ENCODE measurements at regions of chr1 and their contacts with region 1.

Region 1: DNA sequence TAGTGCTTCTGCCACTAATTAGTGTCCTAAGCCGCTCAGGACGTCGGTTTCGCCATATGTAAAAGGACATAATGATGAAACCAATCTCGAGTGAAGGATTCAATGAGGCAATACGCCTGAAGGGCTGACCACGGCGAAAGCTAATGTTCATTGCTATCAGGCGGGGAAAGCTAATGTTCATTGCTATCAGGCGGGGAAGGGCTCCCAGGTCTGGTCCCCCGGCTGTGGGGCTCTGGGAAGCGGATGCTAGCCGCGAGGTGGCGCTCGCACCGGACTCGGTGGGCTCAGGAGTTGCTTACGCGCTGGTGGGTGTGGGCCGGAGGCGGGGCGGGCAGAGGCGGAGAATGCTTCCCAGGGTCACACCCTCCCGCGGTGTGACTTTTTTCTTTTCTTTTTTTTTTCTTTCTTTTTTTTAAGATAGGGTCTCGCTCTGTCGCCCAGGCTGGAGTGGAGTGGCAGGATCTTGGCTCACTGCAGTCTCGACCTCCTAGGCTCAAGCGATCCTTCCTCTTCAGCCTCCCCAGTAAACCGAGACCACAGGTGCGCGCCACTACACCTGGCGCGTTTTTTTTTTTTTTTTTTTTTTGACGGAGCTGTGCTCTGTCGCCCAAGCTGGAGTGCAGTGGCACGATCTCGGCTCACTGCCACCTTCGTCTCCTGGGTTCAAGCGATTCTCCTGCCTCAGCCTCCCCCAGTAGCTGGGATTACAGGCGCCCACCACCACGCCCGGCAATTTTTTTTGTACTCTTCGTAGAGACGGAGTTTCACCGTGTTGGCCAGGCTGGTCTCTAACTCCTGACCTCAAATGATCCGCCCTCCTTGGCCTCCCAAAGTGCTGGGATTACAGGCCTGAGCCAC is 1.1 kb upstream of the PEAR1 start:
- DNase-seq: peak; percentile 92
- ATAC-seq: peak; percentile 97
- H3K4me3 Mint-ChIP-seq: peak overlapping the region; percentile 67
- H3K27ac Mint-ChIP-seq: no peak overlapping the region
- H3K4me1 Mint-ChIP-seq: peaks cover 29% of the 10 kb centered on the region
- H3K27me3 Mint-ChIP-seq: peaks cover 50% of the 10 kb centered on the region

Region 2: DNA sequence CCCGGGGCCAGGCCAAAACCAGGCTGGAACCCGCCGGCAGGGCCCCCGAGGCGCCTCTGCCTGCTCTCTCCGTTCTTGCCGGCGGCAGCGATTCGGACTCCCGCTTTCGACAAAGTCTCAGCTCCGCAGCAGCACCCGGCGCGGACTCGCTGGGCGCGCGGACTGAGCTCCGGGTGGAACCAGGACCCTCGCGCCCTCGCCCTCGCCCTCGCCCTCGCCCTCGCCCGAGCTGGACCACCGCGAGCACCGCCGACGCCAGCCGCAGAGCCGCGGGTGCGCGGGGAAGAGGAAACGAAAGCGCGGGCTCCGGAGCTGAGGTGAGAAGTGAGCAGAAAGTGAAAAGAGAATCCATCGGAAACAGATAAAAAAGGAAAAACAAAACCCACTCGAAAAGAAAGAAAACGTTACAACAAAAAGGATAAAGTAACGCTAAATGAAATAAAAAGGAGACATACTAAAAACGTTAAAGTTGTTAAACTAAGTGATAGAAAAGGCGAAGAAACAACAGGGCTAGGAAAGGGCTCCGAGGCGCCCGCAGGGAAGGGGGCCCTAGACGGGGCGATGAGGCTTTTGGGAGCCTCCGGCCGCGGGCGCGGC is 456.8 kb before region 1 on chr1:
- CTCF ChIA-PET with region 1: no interaction called
- POLR2A ChIA-PET with region 1: no interaction called
- DNase-seq: no peak
- ATAC-seq: peak; percentile 36
- H3K4me3 Mint-ChIP-seq: peak overlapping the region; percentile 66
- H3K27ac Mint-ChIP-seq: no peak overlapping the region
- H3K4me1 Mint-ChIP-seq: peaks cover 24% of the 10 kb centered on the region
- H3K27me3 Mint-ChIP-seq: peaks cover 87% of the 10 kb centered on the region

Region 3: DNA sequence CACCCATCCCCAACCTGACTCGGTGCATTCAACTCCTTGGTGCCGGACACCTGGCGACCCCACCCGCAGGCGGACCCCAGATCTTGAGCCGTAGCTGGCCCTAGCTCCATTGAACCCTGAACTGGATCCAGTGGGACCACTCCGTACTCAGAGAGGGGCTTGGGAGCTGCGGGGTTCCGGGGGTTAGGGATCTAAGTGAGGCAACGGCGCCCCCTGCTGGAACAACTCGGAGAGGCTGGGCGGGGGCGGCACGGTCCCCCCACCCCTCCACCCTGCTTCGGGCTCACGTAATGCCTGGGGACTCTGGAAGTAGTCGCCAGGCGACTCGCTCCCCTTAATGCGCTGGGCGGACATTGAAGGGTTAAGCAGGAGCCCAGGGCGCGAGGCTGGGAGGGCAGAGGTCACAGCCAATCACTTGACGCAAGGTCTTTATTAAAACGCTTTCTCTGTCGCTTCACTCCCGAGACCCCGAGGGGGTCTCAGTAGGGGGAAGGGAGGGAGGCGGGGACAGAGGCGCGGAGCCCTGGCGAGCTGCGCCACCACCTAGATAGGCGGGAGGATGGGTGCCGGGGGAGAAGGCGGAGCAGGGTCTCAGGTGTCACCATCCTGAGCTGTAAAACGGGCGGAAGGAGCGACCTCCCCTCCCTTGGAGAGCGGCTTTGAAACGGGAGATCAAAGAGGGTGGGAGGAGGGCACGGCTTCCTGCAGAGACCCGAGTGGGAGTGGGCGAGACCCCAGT is 186.3 kb before region 1 on chr1:
- CTCF ChIA-PET with region 1: interaction called, 15 read pairs
- POLR2A ChIA-PET with region 1: no interaction called
- DNase-seq: peak; percentile 70
- ATAC-seq: peak; percentile 65
- H3K4me3 Mint-ChIP-seq: peak overlapping the region; percentile 71
- H3K27ac Mint-ChIP-seq: no peak overlapping the region
- H3K4me1 Mint-ChIP-seq: peaks cover 28% of the 10 kb centered on the region
- H3K27me3 Mint-ChIP-seq: peaks cover 33% of the 10 kb centered on the region

Region 4: DNA sequence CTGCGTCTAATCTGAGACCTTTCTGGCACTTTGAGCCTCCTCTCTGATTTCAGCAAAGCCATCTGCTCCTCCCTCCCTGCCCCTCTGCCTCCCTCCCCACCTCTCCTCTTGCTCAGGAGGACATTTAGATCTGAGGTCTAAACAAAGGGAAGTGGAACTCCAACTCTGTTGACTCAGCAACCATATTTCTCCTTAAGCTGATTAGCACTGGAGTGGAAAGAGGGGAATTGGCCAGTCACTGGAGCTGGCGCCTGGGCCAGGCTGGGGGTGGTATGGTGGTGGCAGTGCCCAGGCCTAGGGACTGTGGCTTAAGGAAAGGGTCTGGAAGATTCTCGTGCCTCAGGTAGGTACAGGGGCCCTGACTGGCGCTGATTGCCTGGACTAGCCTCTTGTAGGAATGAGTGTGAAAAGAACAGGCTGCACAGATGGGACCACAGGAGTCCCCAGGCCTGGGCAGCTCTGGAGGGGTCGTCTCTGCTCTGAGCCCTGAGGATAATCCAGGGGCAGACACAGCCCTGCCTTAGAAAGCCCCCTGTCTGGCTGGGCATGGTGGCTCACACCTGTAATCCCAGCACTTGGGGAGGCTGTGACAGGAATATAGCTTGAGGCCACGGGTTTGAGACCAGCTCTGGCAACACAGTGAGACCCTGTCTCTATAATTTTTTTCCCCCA is 87.7 kb before region 1 on chr1:
- CTCF ChIA-PET with region 1: interaction called, 23 read pairs
- POLR2A ChIA-PET with region 1: interaction called, 3 read pairs
- DNase-seq: no peak
- ATAC-seq: no peak
- H3K4me3 Mint-ChIP-seq: no peak overlapping the region
- H3K27ac Mint-ChIP-seq: peak overlapping the region; percentile 73
- H3K4me1 Mint-ChIP-seq: peaks cover 55% of the 10 kb centered on the region
- H3K27me3 Mint-ChIP-seq: no peaks in the 10 kb centered on the region

Region 5: DNA sequence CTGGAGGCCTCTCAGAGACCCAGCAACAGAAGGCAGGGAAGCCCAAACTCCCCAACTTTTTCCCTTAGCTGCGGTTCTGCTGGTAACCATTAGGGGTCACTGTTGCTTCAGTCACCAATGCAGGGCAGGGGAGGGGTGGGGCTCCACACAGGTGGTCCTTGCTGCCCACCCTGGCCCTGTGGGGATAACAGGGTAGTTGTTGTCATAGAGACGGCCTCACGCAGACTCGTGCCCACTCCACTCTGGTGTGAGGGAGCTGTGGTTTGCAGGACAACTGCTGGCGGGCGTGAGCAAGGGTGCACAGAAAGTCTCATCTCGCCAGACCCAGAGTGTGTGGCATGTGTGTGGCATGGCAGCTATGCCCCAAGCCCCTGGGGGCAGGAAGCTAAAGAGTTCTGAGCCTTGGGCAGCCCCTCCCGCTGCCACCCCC is 53.4 kb before region 1 on chr1:
- CTCF ChIA-PET with region 1: interaction called, 93 read pairs
- POLR2A ChIA-PET with region 1: interaction called, 3 read pairs
- DNase-seq: peak; percentile 67
- ATAC-seq: peak; percentile 66
- H3K4me3 Mint-ChIP-seq: no peak overlapping the region
- H3K27ac Mint-ChIP-seq: no peak overlapping the region
- H3K4me1 Mint-ChIP-seq: peaks cover 48% of the 10 kb centered on the region
- H3K27me3 Mint-ChIP-seq: peaks cover 17% of the 10 kb centered on the region

Region 6: DNA sequence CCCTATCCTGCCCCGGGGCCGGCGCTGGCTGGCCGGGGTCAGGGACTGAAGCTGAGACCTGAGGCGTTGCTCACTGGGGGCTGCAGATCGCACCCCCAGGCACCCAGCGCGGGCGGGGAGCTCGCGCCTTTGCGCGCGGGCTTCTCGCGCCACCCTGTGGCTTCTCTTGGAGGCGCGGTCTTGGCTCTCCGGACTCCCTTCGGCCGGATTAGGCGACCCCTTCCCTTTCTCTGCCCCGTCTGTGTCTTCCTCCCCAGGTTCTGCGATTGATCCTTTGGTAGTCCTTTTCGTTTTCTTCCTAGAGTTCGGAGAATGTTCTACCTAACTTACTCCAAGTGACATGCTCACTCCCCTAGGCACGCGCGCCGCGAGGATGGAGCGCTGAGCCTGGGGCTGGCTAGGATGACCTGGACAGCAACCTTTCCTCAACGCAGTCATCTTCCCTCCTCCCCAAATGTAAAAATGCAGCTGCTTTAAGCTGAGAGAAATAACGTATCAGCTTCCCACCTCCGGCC is 32.2 kb before region 1 on chr1:
- CTCF ChIA-PET with region 1: interaction called, 138 read pairs
- POLR2A ChIA-PET with region 1: no interaction called
- DNase-seq: peak; percentile 68
- ATAC-seq: peak; percentile 62
- H3K4me3 Mint-ChIP-seq: peak overlapping the region; percentile 72
- H3K27ac Mint-ChIP-seq: peak overlapping the region; percentile 54
- H3K4me1 Mint-ChIP-seq: peaks cover 56% of the 10 kb centered on the region
- H3K27me3 Mint-ChIP-seq: peaks cover 39% of the 10 kb centered on the region

Region 7: DNA sequence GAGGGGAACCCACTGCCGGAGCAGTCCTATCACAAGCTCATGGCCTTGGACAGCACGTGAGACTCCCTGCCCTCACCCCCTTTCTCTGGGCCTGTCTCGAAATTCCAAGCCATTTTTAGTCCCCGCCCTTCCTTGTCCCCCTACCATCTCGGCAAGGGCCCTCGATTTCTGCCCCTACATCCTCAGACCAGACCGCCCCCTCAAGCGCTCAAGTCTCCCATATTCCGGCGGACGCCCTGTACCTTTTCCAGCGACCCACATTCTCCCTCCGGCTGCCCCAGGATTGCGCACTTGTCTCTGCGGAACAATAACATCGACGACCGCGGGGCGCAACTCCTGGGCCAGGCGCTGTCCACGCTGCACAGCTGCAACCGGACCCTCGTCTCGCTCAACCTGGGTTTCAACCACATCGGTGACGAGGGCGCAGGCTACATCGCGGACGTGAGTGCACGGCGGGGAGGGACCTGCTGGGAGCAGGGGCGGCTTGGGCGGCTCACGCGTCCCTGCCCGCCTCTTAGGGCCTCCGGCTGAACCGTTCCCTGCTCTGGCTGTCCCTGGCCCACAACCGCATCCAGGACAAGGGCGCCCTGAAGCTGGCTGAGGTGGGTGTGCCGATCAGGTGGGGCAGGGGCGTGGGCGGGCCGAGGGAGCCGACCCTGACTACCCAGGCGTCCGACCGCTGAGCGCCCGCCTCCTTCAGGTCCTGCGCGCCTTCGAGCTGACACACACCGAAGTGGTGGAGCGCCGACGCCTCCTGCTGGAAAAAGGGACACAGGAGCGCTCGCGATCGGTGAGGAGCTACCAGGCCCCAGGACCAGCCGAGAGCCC is 35.0 kb after region 1 on chr1:
- CTCF ChIA-PET with region 1: interaction called, 93 read pairs
- POLR2A ChIA-PET with region 1: interaction called, 4 read pairs
- DNase-seq: peak; percentile 81
- ATAC-seq: peak; percentile 82
- H3K4me3 Mint-ChIP-seq: peak overlapping the region; percentile 20
- H3K27ac Mint-ChIP-seq: no peak overlapping the region
- H3K4me1 Mint-ChIP-seq: peaks cover 38% of the 10 kb centered on the region
- H3K27me3 Mint-ChIP-seq: peaks cover 77% of the 10 kb centered on the region

Region 8: DNA sequence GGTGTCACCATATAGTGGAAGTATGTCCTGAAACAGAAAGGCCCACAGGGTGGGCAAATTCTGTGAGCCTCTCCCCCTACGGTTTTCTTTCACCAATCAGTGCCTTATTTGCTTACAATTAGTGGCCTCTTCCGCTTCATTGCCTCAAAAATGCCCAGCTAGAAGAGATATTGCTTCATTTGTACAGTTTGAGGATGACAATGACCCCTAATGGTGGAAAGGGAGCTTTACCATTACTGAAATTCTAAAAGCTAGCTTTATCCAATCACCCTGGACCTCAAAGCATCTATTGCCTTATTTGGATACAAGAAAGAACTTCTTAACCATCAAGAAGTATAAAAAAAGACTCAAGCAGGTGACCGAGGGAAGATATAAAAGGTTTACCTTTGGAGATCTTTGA is 77.6 kb after region 1 on chr1:
- CTCF ChIA-PET with region 1: interaction called, 14 read pairs
- POLR2A ChIA-PET with region 1: no interaction called
- DNase-seq: no peak
- ATAC-seq: no peak
- H3K4me3 Mint-ChIP-seq: no peak overlapping the region
- H3K27ac Mint-ChIP-seq: no peak overlapping the region
- H3K4me1 Mint-ChIP-seq: no peaks in the 10 kb centered on the region
- H3K27me3 Mint-ChIP-seq: peaks cover 58% of the 10 kb centered on the region

Region 9: GRCh38 chr1:157193702-157194391 is 301.4 kb after region 1 on chr1:
- CTCF ChIA-PET with region 1: no interaction called
- POLR2A ChIA-PET with region 1: no interaction called
- DNase-seq: peak; percentile 71
- ATAC-seq: peak; percentile 36
- H3K4me3 Mint-ChIP-seq: no peak overlapping the region
- H3K27ac Mint-ChIP-seq: no peak overlapping the region
- H3K4me1 Mint-ChIP-seq: peaks cover 12% of the 10 kb centered on the region
- H3K27me3 Mint-ChIP-seq: peaks cover 37% of the 10 kb centered on the region

Measured in activated CD8-positive, alpha-beta T cell treated with anti-CD3 and anti-CD28 coated beads, Interleukin-2, amount 10 ng/mL, durations not matched to agents 7 days and 5 days (primary cell).